Colonic mucosa (tissue), 4 donors: ENCODE measurements at regions of chr19 and their contacts with region 1.

Region 1: DNA sequence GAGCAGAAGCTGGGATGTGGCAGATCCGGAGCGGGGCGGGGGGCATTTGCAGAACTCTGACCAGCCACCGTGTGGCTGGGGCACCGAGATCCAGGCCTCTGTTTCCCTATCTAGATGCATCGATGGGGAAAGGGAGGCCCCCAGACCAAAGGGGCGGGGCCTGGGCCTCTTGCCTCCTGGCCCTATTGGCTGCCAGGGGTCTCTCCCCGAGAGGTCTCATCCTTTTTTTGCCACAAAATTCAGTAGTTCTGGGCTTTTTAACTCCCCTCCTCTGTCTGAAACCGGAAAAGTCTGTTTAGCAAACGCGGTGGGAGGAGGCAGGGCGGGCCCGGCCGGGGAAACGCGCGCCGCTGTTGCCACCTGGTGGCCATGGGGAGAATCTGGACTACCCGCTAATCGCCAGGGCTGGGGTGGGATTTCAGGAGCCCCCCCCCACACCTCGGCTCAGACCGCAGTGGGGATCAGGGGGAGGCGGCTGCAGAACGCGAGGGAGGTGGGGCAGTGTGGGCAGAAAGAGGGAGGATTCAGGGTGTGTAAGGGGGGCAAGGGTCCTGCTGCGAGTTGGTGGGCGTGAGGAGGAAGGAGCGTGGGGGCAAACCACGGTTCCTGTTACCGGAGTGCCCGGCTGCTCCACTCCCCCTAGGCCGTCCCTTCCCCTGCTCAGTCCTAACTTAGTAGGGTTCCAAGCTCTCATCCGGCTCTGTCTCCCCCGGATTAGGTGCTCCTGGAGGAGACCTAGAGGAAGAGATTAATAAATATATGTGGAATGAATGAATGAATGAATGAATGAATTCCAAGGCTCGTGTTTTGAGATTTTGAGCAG is 28.3 kb downstream of the IL12RB1 start:
- DNase-seq: peak; percentile 83
- H3K4me3 ChIP-seq: peak overlapping the region; percentile 8
- H3K27ac ChIP-seq: peak overlapping the region; percentile 65
- H3K4me1 ChIP-seq: no peaks in the 10 kb centered on the region
- H3K27me3 ChIP-seq: no peaks in the 10 kb centered on the region
- CTCF ChIP-seq: peak; percentile 96

Region 2: GRCh38 chr19:17938092-17938845 is 120.2 kb before region 1 on chr19:
- intact Hi-C with region 1: loop called (anchors 5 kb)
- DNase-seq: peak; percentile 80
- H3K4me3 ChIP-seq: no peak overlapping the region
- H3K27ac ChIP-seq: no peak overlapping the region
- H3K4me1 ChIP-seq: peaks cover 9% of the 10 kb centered on the region
- H3K27me3 ChIP-seq: no peaks in the 10 kb centered on the region
- CTCF ChIP-seq: peak; percentile 90

Region 3: DNA sequence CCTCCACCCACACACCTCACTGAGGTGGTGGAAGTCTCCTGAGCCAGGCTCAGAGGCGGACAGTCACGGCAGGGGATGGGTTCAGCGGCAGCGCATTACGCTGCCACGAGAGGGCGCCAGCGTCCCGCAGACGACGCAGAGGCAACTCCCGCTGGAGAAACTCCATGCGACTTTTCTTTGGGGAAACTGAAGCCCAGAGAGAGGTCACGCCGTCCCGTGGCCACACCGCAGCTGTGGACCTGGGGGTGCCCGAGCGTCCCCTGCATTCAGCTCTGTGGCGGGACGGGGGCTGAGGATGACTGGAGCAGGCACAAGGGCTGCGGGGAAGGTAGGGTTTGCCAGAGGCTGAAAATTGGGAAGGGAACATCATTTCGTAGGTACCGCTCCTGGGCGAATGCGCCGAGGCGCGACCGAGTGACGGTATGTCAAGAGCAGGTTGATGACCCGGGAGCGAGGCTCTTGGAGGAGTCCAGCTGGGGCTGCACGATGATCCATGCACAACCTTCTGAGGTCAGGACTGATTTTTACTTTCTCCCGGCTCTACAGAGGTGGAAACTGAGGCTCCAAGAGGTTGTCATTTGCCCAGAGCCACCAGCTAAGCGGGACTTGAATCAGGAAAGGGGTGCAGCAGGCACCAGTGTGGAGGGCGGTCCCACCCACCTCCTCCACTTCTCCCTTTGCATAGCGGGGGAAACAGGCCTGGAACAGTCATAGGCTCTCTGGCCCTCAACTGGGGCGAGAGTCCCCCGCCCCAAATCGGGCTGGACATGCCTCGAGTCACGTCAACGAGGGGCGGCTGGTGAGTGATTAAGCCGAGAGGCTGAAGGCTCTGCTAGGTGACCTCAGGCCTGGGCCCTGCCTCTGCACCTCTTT is 51.1 kb before region 1 on chr19:
- intact Hi-C with region 1: loop called (anchors 1 kb)
- DNase-seq: peak; percentile 87
- H3K4me3 ChIP-seq: peak overlapping the region; percentile 39
- H3K27ac ChIP-seq: peak overlapping the region; percentile 74
- H3K4me1 ChIP-seq: peaks cover 3% of the 10 kb centered on the region
- H3K27me3 ChIP-seq: no peaks in the 10 kb centered on the region
- CTCF ChIP-seq: peak; percentile 99